IMR-90 (cell line): ENCODE measurements at regions of chr10 and their contacts with region 1.

Region 1: DNA sequence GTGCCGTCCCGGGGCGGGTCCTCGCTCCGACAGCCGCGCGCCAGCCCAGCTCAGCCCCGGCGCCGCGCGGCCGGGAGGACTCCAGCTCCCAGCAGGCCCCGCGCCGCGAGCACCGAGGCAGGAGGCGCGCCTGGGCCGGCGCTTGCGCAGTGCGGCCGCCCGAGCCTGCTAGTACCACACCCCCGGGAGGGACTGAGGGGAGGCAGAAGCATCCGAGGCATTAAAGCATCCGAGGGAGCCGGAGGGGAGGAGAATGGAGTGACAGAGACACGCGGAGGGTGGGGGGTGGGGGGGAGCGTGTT is at the start of gene GRK5:
- DNase-seq: peak; percentile 98
- ATAC-seq: peak; percentile 90
- H3K4me3 ChIP-seq: peak within 1 kb of the TSS; percentile 61
- H3K27ac ChIP-seq: peak within 1 kb of the TSS; percentile 96
- H3K4me1 ChIP-seq: peaks cover 18% of the 10 kb centered on the region
- H3K27me3 ChIP-seq: no peaks in the 10 kb centered on the region
- CTCF ChIP-seq: no peak
- POLR2A ChIP-seq: peak; percentile 69; the same call in 1 of the 2 replicates
- RAD21 ChIP-seq: no peak
- total RNA-seq, gene GRK5: 11.9 and 12.9 TPM in 2 replicates

Region 2: GRCh38 chr10:119080521-119081260 is 126.6 kb before region 1 on chr10 and contains the start of gene EIF3A:
- CTCF ChIA-PET with region 1: no interaction called
- POLR2A ChIA-PET with region 1: no interaction called
- dilution Hi-C with region 1: no loop called
- in situ Hi-C with region 1: no loop called
- intact Hi-C with region 1: no loop called
- DNase-seq: peak; percentile 90
- ATAC-seq: peak; percentile 87
- H3K4me3 ChIP-seq: peak within 1 kb of the TSS; percentile 85
- H3K27ac ChIP-seq: peak within 1 kb of the TSS; percentile 96
- H3K4me1 ChIP-seq: 0 out of 2 replicates have a peak, but pooled peaks cover 1% of the 10 kb centered on the region
- H3K27me3 ChIP-seq: no peaks in the 10 kb centered on the region
- CTCF ChIP-seq: no peak
- POLR2A ChIP-seq: peak; percentile 96
- RAD21 ChIP-seq: no peak
- total RNA-seq, gene EIF3A: 145 and 156 TPM in 2 replicates

Region 3: GRCh38 chr10:119178372-119179119 is 28.8 kb before region 1 on chr10 and contains the start of gene PRDX3:
- CTCF ChIA-PET with region 1: no interaction called
- POLR2A ChIA-PET with region 1: no interaction called
- dilution Hi-C with region 1: no loop called
- in situ Hi-C with region 1: no loop called
- intact Hi-C with region 1: no loop called
- DNase-seq: peak; percentile 83
- ATAC-seq: peak; percentile 99
- H3K4me3 ChIP-seq: peak within 1 kb of the TSS; percentile 90
- H3K27ac ChIP-seq: peak within 1 kb of the TSS; percentile 99
- H3K4me1 ChIP-seq: peaks cover 3% of the 10 kb centered on the region
- H3K27me3 ChIP-seq: no peaks in the 10 kb centered on the region
- CTCF ChIP-seq: 0 out of 2 replicates have a peak, but pooled peaks have one; percentile 13
- POLR2A ChIP-seq: peak; percentile 93
- RAD21 ChIP-seq: peak; percentile 3; the same call in 1 of the 2 replicates
- total RNA-seq, gene PRDX3: 169 and 195 TPM in 2 replicates

Region 4: DNA sequence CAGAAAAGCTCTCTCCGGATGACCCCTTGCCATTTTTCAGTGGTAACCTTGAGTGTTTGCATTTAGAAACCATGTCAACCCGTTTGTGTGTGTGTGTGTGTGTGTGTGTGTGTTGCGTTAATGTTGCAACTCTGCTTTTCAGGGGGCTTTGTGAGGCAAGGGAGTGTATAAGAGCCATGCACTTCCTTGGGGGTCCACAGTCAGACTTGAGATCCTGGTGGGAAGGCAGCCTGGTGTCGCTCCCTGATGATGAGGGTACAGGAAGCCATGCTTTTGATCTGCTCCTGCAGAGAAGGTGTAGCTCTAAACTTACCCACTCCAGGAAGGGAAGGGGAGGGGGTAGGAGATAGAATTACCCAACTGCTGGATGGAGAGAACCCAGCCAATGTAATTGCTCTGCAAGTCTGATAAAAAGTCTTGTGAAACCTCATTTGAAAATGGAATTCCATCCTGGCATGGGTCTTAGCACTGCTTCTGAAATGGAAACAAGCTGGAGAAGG is 10.7 kb after region 1 on chr10:
- CTCF ChIA-PET with region 1: interaction called, 7 read pairs
- POLR2A ChIA-PET with region 1: interaction called, 33 read pairs
- dilution Hi-C with region 1: no loop called
- in situ Hi-C with region 1: no loop called
- intact Hi-C with region 1: no loop called
- DNase-seq: peak; percentile 69
- ATAC-seq: peak; percentile 52
- H3K4me3 ChIP-seq: no peak overlapping the region
- H3K27ac ChIP-seq: peak overlapping the region; percentile 51; the same call in 1 of the 2 replicates
- H3K4me1 ChIP-seq: peaks cover 38% of the 10 kb centered on the region
- H3K27me3 ChIP-seq: no peaks in the 10 kb centered on the region
- CTCF ChIP-seq: no peak
- POLR2A ChIP-seq: no peak
- RAD21 ChIP-seq: no peak

Region 5: DNA sequence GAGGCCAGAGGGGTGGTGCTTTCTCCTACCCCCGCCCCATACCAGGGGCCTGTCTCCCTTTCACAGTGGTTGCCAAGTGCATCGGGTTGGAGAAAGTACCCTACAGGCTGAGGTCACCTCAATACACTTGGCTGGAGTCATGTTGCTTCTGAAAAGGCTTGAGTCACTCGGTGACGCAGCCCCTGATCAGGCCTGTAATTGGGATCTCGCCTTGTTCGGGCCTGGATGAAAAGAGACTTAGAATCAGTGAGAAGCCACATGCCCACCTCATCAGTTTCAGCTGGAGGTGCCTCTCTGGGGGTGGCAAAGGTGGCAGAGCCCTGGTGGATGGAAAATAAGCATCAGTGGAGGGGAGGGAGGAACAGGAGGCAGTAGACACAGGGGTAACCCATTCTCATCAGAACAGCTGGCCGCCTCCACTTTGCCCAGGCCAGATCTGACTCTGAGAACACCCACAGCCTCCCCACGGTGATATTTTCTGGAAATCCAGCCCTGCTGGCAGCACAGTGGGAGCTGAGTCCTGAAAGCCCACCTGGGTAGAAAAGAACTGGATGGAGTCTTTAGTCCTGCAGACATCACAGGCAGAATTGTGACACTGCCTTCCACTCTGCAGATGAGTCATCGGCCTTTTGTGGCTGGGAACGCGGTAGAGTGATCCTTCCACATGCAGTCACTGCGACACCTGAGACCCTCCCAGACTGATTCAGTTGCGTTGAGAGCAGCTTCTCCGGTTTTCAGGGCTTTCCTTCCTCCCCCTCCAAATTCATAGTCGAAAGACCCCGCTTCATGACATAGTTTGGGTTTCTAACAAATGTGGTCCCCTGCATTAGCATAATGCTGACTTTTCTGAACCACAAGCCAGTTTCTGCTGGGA is 108.0 kb after region 1 on chr10:
- CTCF ChIA-PET with region 1: interaction called, 6 read pairs
- POLR2A ChIA-PET with region 1: interaction called, 3 read pairs
- dilution Hi-C with region 1: no loop called
- in situ Hi-C with region 1: no loop called
- intact Hi-C with region 1: loop called (anchors 5 kb)
- DNase-seq: peak; percentile 98
- ATAC-seq: peak; percentile 81
- H3K4me3 ChIP-seq: no peak overlapping the region
- H3K27ac ChIP-seq: peak overlapping the region; percentile 79
- H3K4me1 ChIP-seq: peaks cover 51% of the 10 kb centered on the region
- H3K27me3 ChIP-seq: no peaks in the 10 kb centered on the region
- CTCF ChIP-seq: no peak
- POLR2A ChIP-seq: peak; percentile 81
- RAD21 ChIP-seq: no peak

Region 6: GRCh38 chr10:119416855-119417254 is 209.5 kb after region 1 on chr10:
- CTCF ChIA-PET with region 1: interaction called, 7 read pairs
- POLR2A ChIA-PET with region 1: interaction called, 7 read pairs
- dilution Hi-C with region 1: no loop called
- in situ Hi-C with region 1: loop called (anchors 5 kb)
- intact Hi-C with region 1: loop called (anchors 1 kb)
- DNase-seq: peak; percentile 60
- ATAC-seq: no peak
- H3K4me3 ChIP-seq: no peak overlapping the region
- H3K27ac ChIP-seq: 0 out of 2 replicates have a peak overlapping the region, but pooled peaks have one; percentile 2
- H3K4me1 ChIP-seq: peaks cover 36% of the 10 kb centered on the region
- H3K27me3 ChIP-seq: no peaks in the 10 kb centered on the region
- CTCF ChIP-seq: peak; percentile 77
- POLR2A ChIP-seq: peak; percentile 49; the same call in 1 of the 2 replicates
- RAD21 ChIP-seq: peak; percentile 91

Region 7: DNA sequence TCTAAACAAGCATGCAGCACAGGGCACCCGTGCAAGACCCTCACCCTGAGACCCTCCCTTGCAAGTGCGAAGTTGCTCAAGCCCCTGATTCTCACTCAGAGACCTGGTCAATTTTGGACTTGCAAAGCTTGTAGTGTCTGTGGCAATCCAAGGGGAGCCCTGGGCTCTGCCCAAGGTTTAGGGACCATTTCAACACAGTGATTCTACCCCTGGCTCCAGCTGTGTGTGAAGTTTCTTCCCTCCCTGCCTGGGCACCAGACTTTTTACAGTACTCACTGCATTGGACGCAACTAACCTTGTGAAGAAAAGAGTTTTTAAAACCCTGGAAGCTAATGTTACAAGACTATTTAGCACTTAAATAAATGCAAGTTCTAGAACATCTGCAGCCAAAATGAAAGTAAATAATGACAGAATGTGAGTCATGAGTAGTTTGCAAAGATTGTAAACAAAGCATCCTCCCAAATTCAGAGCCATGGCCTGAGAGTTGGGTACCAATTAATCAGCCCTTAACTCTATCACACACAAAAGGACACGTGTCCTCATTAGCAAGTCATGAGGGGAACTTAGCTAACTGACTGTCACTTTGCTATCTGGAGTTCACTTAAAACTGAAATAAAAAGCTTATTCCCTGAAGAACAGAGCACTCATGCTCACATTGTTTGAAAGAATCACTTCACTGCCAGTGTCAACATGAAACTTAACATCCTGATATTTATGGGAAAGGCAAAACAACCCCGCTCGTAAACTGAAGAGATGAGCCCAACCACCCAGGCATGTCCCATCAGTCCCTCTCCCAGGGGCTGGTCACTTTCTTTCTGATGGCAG is 287.1 kb after region 1 on chr10:
- CTCF ChIA-PET with region 1: interaction called, 3 read pairs
- POLR2A ChIA-PET with region 1: no interaction called
- dilution Hi-C with region 1: no loop called
- in situ Hi-C with region 1: no loop called
- intact Hi-C with region 1: loop called (anchors 5 kb)
- DNase-seq: peak; percentile 76
- ATAC-seq: peak; percentile 46
- H3K4me3 ChIP-seq: no peak overlapping the region
- H3K27ac ChIP-seq: peak overlapping the region; percentile 94
- H3K4me1 ChIP-seq: peaks cover 30% of the 10 kb centered on the region
- H3K27me3 ChIP-seq: no peaks in the 10 kb centered on the region
- CTCF ChIP-seq: no peak
- POLR2A ChIP-seq: no peak
- RAD21 ChIP-seq: no peak